Astrocyte of the cerebellum (primary cell): ENCODE measurements at regions of chr10 and their contacts with region 1.

Region 1: DNA sequence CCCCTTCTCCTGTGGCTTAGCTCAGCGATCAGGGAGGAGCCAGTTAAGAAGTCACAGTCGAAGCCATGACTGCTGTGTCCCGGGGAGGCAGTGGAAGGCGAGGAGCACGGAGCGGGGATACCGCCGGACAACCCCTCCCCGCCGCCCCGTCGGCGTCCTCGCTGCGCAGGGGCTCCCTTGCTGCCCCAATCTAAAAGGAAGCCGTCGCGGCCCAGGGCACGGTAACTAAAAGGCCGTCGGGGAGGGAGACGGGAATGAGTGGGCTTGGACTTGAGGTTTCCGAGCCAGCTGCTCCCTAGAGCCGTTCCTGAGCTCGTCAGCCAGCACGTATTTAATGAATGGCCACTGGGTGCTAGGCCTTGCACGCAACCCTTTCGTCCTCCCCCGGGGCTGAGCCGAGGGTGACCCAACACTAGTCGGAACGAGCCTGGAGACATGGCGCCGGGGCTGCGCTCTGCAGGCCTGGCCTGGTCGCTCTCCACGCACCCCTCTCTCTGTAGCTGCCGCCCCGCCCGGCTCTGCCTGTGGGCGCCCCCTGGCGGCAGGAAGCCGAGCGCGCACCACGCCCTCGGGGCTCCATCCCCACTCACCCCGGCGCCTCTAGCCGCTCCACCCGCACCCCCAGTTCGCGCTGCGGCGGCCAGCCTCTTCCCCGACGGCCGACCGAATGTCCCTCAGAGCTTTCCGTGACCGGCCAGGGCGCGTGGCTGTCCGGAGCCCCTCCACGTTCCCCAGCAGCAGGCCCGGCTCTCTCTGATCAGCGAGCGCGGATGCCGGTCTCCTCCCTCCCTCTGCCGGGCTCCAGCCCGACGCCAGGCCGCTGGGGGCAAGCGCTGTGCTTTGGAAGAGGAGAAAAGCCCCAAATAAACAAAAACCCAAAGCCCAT is 29.3 kb upstream of the KCNK18 start:
- DNase-seq: no peak
- H3K4me3 ChIP-seq: no peak overlapping the region
- CTCF ChIP-seq: peak; percentile 68

Region 2: DNA sequence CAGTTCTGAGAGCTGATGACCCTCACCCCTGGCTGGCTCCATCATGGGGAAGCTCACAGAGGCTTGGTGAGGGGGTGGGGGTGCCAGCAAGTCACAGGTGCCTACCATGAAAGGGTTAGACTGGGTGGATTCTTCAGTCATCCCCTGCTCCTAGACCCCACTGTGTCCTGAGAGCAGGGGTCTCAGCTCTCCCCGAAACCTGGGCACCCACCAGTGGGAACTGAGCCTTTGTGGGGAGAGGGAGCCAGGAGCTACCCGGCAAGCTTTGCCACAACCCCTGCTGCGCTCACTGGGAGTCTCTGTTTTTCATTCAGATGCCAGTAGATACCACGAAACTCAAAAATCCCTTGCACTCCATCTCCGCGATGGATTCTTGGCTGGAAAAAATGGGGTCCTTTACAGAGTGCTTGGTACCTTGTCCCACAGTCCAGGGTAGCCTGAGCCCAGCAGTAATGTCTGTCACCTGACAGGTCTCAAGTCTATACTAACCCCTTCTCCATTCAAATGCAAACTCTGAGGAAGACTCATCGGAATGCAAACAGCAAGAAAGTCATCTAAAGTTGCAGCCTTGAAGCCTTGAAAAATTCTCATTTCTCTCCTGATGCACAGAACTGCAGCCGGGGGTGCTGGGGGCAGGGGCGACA is 367.6 kb before region 1 on chr10:
- in situ Hi-C with region 1: loop called (anchors 5 kb)
- DNase-seq: no peak
- H3K4me3 ChIP-seq: no peak overlapping the region
- CTCF ChIP-seq: no peak

Region 3: GRCh38 chr10:117107238-117107637 is 60.8 kb before region 1 on chr10:
- in situ Hi-C with region 1: loop called (anchors 10 kb)
- DNase-seq: no peak
- H3K4me3 ChIP-seq: no peak overlapping the region
- CTCF ChIP-seq: no peak

Region 4: DNA sequence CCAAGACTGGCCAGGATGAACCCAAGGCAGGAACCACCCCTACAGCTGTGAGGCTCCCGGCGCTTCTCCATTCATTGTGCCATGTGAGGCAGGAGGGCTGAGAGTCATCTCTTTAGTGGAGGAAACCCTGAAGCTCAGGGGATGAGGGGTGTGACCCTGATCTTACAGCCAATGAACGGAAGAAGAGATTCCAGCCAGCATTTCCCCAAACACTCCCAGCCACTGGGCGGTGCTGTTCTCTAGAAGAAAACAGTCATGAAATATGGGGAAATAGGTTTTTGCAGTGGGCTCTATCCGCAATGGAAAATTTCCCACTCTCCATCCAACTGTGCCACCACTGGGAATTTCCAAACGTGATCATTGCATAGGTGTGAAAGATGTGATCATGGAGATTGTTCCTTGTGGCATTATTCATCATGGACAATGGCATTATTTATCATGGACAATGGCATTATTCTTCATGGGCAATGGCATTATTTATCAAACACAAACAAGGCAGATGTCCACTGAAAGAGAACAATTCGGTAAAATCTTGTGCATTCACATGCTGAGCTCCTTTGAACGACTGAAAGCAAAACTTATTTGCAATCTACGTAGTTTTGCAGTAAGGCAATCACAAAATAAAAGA is 58.9 kb after region 1 on chr10:
- in situ Hi-C with region 1: no loop called
- DNase-seq: no peak
- H3K4me3 ChIP-seq: no peak overlapping the region
- CTCF ChIP-seq: peak; percentile 47